ENCODE measurements at regions of chr3 and their contacts with region 1.

Region 1: DNA sequence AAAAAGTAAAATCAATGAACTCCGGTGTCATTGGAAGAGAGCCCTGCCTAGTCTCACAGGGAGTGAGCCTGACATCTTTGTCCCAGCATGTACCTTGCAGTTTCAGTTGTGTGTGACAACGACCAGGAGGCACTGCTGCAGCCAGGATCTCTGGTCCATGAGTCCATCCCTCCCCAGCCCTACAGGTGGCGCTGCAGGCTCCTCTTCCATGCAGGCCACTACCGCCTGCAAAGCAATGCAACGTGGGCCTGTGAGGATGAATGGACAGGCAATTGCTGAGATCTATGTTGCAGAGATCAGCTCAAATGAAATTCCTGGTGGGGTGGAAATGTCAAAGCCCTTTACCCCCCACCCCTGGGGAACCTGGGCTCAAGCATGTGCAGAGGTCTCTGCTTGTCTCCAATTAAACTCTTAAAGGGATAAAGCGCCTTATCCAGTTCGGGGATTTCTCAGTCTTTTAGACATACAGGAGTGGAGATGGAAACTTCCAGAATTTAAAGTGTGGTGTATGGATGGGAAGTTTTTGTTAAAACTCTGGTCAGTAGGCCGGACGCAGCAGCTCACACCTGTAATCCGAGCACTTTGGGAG is 35.8 kb downstream of the TKT start:
- DNase-seq: peak; percentile 79 to 86 (median 81)
- H3K4me3 ChIP-seq: no peak overlapping the region
- H3K27ac ChIP-seq: no peak overlapping the region
- H3K4me1 ChIP-seq: peaks cover 0 to 2% (median 0%) of the 10 kb centered on the region in 4 experiments
- H3K27me3 ChIP-seq: no peaks in the 10 kb centered on the region

Region 2: GRCh38 chr3:53236112-53236841 is 16.3 kb after region 1 on chr3:
- CTCF ChIA-PET with region 1: interaction called, 14 read pairs
- POLR2A ChIA-PET with region 1: no interaction called
- DNase-seq: peak; percentile 57 to 83 (median 78)
- H3K4me3 ChIP-seq: peak overlapping the region in 1 of 7 experiments; percentile 4
- H3K27ac ChIP-seq: peak overlapping the region; percentile 27 to 80
- H3K4me1 ChIP-seq: peaks cover 0 to 30% (median 13%) of the 10 kb centered on the region in 4 experiments
- H3K27me3 ChIP-seq: no peaks in the 10 kb centered on the region

Region 3: GRCh38 chr3:53255775-53256703 is 36.0 kb after region 1 on chr3 and contains the start of gene TKT:
- CTCF ChIA-PET with region 1: interaction called, 12 read pairs
- POLR2A ChIA-PET with region 1: no interaction called
- DNase-seq: peak; percentile 84 to 90 (median 88)
- H3K4me3 ChIP-seq: peak within 1 kb of the TSS; percentile 78 to 96 (median 95)
- H3K27ac ChIP-seq: peak within 1 kb of the TSS; percentile 46 to 73
- H3K4me1 ChIP-seq: peaks cover 16 to 41% (median 37%) of the 10 kb centered on the region in 4 experiments
- H3K27me3 ChIP-seq: no peaks in the 10 kb centered on the region

Region 4: GRCh38 chr3:53274938-53275605 is 55.1 kb after region 1 on chr3:
- CTCF ChIA-PET with region 1: interaction called, 15 read pairs
- POLR2A ChIA-PET with region 1: interaction called, 4 read pairs
- DNase-seq: peak in 2 of 3 donors; percentile 58 to 65
- H3K4me3 ChIP-seq: peak overlapping the region in 2 of 7 experiments; percentile 19 to 20
- H3K27ac ChIP-seq: peak overlapping the region in 1 of 2 experiments; percentile 46
- H3K4me1 ChIP-seq: peaks cover 5 to 37% (median 21%) of the 10 kb centered on the region in 4 experiments
- H3K27me3 ChIP-seq: no peaks in the 10 kb centered on the region

Region 5: DNA sequence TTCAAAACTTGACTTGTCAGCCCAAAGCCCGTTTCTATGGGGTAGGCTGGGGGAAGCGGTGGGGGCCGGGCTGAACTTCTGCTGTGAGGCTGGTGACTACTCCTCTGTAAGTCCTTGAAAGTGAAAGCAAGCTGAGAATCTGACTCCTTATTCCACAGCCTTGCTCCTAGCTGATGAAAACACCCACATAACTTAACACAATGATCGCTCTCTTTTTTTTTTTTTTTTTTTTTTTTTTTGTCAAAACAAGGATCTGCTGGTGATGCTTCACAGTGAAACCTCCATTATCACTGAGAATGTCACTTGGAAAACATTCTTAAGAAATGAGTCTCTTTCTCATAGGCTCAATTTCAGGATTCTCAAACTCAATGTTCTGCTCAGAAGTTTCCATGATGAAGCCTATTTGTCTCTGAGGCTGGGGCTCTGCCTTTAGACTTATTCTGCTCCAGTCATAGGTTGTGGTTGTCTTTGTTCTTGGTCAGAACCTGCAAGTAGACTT is 67.2 kb after region 1 on chr3:
- CTCF ChIA-PET with region 1: interaction called, 21 read pairs
- POLR2A ChIA-PET with region 1: no interaction called
- DNase-seq: peak; percentile 26 to 65 (median 63)
- H3K4me3 ChIP-seq: no peak overlapping the region
- H3K27ac ChIP-seq: peak overlapping the region in 1 of 2 experiments; percentile 6
- H3K4me1 ChIP-seq: peaks cover 0 to 7% (median 0%) of the 10 kb centered on the region in 4 experiments
- H3K27me3 ChIP-seq: no peaks in the 10 kb centered on the region

Measured in common myeloid progenitor, CD34-positive (primary cell).